ENCODE measurements at regions of chr21 and their contacts with region 1.

Region 1: DNA sequence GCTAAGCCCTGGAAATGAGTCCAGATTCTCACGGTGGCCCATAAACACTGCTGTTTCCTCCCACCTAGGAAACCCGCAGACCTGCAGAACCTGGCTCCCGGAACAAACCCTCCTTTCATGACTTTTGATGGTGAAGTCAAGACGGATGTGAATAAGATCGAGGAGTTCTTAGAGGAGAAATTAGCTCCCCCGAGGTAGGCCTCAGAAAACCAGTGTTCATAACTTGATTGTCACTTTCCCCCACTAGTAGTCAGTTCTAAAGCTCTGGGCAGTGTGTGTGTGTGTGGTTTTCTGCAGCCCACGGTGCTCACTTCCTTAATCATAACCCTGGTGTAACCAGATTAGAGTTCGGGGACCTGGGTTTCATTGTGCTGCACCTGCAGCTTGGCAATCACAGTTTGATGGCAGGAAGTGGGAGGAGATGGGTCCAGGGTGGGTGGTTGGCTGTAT is 39.1 kb downstream of the CLIC6 start:
- DNase-seq: peak; percentile 83
- H3K4me3 Mint-ChIP-seq: no peak overlapping the region
- H3K27ac Mint-ChIP-seq: peak overlapping the region; percentile 73
- H3K4me1 Mint-ChIP-seq: peaks cover 28% of the 10 kb centered on the region
- H3K27me3 Mint-ChIP-seq: peaks cover 4% of the 10 kb centered on the region

Region 2: GRCh38 chr21:34722684-34723300 is 14.9 kb after region 1 on chr21:
- CTCF ChIA-PET with region 1: interaction called, 14 read pairs
- intact Hi-C with region 1: loop called (anchors 1 kb)
- DNase-seq: peak; percentile 49
- H3K4me3 Mint-ChIP-seq: no peak overlapping the region
- H3K27ac Mint-ChIP-seq: no peak overlapping the region
- H3K4me1 Mint-ChIP-seq: no peaks in the 10 kb centered on the region
- H3K27me3 Mint-ChIP-seq: no peaks in the 10 kb centered on the region

Region 3: DNA sequence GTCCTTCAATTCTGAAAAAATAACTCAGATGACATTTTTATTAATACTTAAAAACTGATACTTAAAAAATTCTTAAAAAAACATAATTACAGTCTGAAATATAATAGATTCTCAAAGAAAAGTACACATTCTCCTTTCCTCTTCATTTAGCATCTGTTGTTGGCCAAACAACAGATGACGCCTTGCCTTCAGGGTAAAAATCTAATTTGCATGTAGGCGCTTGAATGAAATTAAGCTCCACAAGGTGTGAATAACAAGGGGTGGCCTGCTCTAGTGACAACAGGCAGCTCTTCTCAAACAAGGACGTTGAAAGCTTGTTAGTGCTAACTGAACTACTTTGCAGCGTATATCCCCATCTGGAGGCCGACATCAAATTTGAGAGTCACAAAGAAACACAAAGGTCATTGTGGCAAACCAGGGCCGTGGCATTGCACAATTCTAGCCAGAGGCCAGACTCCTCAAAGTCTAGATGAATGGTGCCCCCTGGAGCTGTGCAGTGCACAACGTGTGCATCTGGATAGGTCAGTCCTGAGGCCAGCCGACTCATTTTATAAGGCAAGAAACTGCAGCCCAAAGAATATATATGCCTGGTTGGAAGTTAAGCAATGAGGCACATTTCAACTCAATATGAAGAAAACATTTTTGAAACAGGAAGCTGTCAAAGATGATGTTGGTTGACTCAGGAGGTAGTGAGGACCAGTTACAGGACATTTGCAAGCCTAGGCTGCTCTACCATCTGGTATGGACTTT is 800.4 kb after region 1 on chr21:
- CTCF ChIA-PET with region 1: no interaction called
- intact Hi-C with region 1: loop called (anchors 10 kb)
- DNase-seq: peak; percentile 42
- H3K4me3 Mint-ChIP-seq: no peak overlapping the region
- H3K27ac Mint-ChIP-seq: no peak overlapping the region
- H3K4me1 Mint-ChIP-seq: peaks cover 58% of the 10 kb centered on the region
- H3K27me3 Mint-ChIP-seq: no peaks in the 10 kb centered on the region